Endothelial cell of umbilical vein (primary cell): ENCODE measurements at regions of chr11 and their contacts with region 1.

Region 1: DNA sequence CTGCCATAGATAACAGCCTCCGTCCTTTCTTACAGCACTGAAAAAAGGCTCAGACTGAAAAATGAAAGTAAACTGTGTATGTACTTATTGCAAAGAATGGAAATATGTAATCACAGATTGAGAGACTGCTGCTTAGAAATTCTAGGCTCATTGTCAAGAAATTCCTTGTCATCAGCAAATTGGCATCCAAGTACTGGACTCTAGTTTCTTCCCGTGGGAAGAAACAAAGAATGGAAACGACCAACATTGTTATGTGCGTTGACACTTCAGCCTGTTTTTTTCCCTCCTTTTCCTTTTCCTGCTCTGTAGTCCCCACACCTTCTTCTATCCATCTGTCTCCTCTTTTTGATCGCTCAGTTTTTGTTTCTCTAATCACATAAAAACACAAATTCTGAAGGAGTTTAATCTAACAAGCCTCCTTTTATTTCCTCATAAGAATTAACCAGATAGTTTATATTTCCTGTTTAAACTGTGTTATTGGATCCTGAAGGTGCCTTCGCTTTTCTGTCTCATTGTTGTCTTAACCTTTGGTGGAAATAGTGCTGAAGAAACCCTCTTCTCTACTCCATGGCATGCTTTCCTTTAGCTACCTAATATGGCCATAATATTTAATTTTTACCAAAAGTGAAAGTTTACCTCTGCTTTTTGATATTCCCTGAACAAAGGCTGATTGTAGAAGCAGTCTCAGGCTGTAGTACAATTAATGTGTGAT is 20.0 kb upstream of the CASP12 start:
- DNase-seq: peak; percentile 98
- H3K4me3 ChIP-seq: peak overlapping the region; percentile 55 to 81 (median 65)
- H3K27ac ChIP-seq: peak overlapping the region; percentile 81
- H3K4me1 ChIP-seq: peaks cover 25% of the 10 kb centered on the region
- H3K27me3 ChIP-seq: no peaks in the 10 kb centered on the region
- CTCF ChIP-seq: no peak
- POLR2A ChIP-seq: no peak

Region 2: DNA sequence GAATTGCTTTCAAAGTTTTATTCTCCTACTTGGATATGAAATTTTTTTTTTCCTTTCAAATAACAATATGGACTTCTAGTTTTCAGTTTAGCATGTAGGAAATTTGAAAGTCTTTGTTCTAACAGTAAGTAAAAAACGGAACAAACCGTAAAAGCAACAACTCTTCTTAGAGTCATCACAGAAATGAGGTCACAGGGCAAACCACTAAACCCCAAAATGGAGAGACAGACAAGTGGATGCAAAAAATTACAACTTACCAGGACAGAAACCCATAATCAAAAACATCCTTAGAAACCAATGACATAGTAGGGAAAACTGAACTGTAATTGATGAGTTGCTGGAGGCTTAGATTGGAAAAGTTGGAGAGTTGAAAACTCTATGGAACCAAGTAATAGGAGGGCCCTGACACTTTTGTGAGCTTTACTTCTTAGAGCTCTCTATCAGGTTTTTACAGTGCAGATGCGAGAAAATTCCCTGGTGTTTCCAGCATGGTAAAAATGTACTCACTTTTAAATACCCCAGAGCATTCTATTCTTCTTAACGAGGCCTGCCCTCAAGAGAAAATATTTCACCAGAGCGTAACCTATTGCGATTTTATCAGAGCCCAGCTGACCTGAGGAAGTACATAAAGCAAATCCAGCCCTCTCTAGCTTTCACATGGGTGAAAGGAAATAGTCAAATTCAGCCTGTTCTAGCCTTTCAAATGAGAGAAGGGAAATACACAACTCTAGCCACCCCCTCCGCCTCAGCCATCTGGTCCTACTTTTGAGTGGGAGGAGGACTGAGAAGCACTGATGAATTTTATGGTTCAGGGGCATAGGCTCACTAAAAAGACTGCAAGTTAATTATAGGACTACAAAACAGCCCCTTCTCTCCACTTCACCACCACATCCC is 59.1 kb before region 1 on chr11:
- CTCF ChIA-PET with region 1: no interaction called
- POLR2A ChIA-PET with region 1: no interaction called
- dilution Hi-C with region 1: no loop called
- intact Hi-C with region 1: no loop called
- DNase-seq: no peak
- H3K4me3 ChIP-seq: no peak overlapping the region
- H3K27ac ChIP-seq: no peak overlapping the region
- H3K4me1 ChIP-seq: no peaks in the 10 kb centered on the region
- H3K27me3 ChIP-seq: no peaks in the 10 kb centered on the region
- CTCF ChIP-seq: no peak
- POLR2A ChIP-seq: no peak

Region 3: DNA sequence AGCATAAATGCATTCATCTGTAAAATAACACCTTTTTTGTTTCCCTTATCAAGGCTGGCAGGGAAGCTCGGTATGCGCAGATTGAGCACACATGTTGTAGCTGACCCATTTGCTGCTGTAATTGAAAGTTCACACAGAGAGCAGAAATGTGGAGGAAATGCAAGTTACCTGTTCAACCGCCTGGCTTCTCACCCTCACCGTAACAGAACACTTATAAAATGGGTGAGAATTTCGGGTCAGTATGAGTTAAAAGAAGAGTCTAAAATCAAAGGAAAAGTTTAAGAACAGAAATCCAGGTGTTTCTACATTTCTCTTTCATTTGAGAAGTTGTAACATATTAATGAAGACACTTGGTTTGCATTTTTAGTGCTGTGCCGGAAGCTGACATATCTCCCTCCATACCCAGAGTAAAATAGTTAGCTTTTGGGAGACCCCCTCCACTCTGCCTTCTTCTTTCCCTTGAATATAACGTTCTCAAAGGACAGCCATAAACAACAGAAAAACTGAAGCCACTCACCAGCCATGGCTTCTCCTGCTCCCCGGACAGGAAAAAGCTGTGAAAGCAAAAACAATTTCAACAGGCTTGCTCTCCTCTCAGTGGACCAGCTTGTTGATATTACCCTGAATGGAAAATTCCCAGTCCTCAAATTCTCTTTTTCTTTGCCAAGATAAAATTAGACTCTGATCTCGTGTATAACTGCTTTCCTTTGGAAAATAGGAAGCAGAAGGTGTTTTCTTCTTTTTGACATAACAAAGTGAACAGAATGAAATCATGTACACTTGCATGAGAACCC is 20.2 kb before region 1 on chr11 and contains the start of gene CASP12:
- CTCF ChIA-PET with region 1: interaction called, 3 read pairs
- POLR2A ChIA-PET with region 1: no interaction called
- dilution Hi-C with region 1: no loop called
- intact Hi-C with region 1: loop called (anchors 1 kb)
- DNase-seq: peak; percentile 97
- H3K4me3 ChIP-seq: peak within 1 kb of the TSS in 2 of 3 experiments; percentile 23 to 41
- H3K27ac ChIP-seq: peak within 1 kb of the TSS; percentile 74
- H3K4me1 ChIP-seq: peaks cover 30% of the 10 kb centered on the region
- H3K27me3 ChIP-seq: no peaks in the 10 kb centered on the region
- CTCF ChIP-seq: no peak
- POLR2A ChIP-seq: peak; percentile 14
- total RNA-seq, gene CASP12: 2.6 and 3.9 TPM in 2 replicates